Caco-2 (cell line): ENCODE measurements at regions of chrX and their contacts with region 1.

Region 1: GRCh38 chrX:2410279-2411020 is 90.3 kb downstream of the DHRSX start:
- DNase-seq: peak; percentile 85 to 92
- H3K4me3 ChIP-seq: 0 out of 2 replicates have a peak overlapping the region, but pooled peaks have one; percentile 3
- H3K4me3 Mint-ChIP-seq: peak overlapping the region; percentile 71
- H3K27ac Mint-ChIP-seq: peak overlapping the region; percentile 96
- H3K4me1 ChIP-seq: peaks cover 35% of the 10 kb centered on the region
- H3K4me1 Mint-ChIP-seq: peaks cover 22% of the 10 kb centered on the region
- H3K27me3 ChIP-seq: no peaks in the 10 kb centered on the region
- H3K27me3 Mint-ChIP-seq: no peaks in the 10 kb centered on the region
- CTCF ChIP-seq: no peak

Region 2: GRCh38 chrX:2471641-2472040 is 61.2 kb after region 1 on chrX:
- CTCF ChIA-PET with region 1: no interaction called
- POLR2A ChIA-PET with region 1: no interaction called
- intact Hi-C with region 1: loop called (anchors 2 kb)
- DNase-seq: no peak
- H3K4me3 ChIP-seq: no peak overlapping the region
- H3K4me3 Mint-ChIP-seq: no peak overlapping the region
- H3K27ac Mint-ChIP-seq: no peak overlapping the region
- H3K4me1 ChIP-seq: peaks cover 49% of the 10 kb centered on the region
- H3K4me1 Mint-ChIP-seq: peaks cover 21% of the 10 kb centered on the region
- H3K27me3 ChIP-seq: no peaks in the 10 kb centered on the region
- H3K27me3 Mint-ChIP-seq: no peaks in the 10 kb centered on the region
- CTCF ChIP-seq: no peak

Region 3: GRCh38 chrX:2523911-2524310 is 113.5 kb after region 1 on chrX:
- CTCF ChIA-PET with region 1: no interaction called
- POLR2A ChIA-PET with region 1: no interaction called
- intact Hi-C with region 1: no loop called
- DNase-seq: no peak
- H3K4me3 ChIP-seq: no peak overlapping the region
- H3K4me3 Mint-ChIP-seq: no peak overlapping the region
- H3K27ac Mint-ChIP-seq: no peak overlapping the region
- H3K4me1 ChIP-seq: no peaks in the 10 kb centered on the region
- H3K4me1 Mint-ChIP-seq: no peaks in the 10 kb centered on the region
- H3K27me3 ChIP-seq: no peaks in the 10 kb centered on the region
- H3K27me3 Mint-ChIP-seq: no peaks in the 10 kb centered on the region
- CTCF ChIP-seq: no peak

Region 4: DNA sequence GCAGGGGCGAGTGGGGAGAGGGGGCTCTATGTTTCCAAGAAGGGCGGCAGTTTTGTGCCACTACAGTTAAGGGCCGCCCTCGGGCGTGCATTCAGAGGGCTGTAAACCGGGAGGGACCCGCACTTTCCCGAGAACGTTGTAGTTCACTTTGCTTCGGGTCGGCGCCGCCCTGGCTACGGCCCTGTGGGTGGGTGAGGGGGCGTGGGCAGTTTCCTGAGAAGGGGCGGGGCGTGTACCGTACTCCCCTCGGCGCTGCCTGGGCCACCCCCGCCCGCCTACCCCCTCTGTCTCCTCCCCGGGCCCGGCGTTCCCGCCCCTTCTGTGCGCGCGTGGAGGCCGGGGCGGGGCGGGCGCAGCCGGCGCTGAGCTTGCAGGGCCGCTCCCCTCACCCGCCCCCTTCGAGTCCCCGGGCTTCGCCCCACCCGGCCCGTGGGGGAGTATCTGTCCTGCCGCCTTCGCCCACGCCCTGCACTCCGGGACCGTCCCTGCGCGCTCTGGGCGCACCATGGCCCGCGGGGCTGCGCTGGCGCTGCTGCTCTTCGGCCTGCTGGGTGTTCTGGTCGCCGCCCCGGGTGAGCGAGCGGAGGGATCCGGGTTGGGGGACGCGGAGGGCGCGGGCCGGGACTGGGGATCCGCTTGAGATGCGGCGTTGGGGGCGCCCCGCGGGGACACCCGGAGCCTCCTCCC is 280.5 kb after region 1 on chrX and contains the start of gene CD99:
- CTCF ChIA-PET with region 1: no interaction called
- POLR2A ChIA-PET with region 1: no interaction called
- intact Hi-C with region 1: no loop called
- DNase-seq: peak; percentile 95 to 96
- H3K4me3 ChIP-seq: peak within 1 kb of the TSS; percentile 94
- H3K4me3 Mint-ChIP-seq: peak within 1 kb of the TSS; percentile 76
- H3K27ac Mint-ChIP-seq: peak within 1 kb of the TSS; percentile 89
- H3K4me1 ChIP-seq: peaks cover 22% of the 10 kb centered on the region
- H3K4me1 Mint-ChIP-seq: peaks cover 28% of the 10 kb centered on the region
- H3K27me3 ChIP-seq: no peaks in the 10 kb centered on the region
- H3K27me3 Mint-ChIP-seq: no peaks in the 10 kb centered on the region
- CTCF ChIP-seq: no peak
- total RNA-seq, gene CD99: 362 and 407 TPM in 2 replicates